Right ventricle myocardium superior (tissue), 1 donor: ENCODE measurements at regions of chr2 and their contacts with region 1.

Region 1: DNA sequence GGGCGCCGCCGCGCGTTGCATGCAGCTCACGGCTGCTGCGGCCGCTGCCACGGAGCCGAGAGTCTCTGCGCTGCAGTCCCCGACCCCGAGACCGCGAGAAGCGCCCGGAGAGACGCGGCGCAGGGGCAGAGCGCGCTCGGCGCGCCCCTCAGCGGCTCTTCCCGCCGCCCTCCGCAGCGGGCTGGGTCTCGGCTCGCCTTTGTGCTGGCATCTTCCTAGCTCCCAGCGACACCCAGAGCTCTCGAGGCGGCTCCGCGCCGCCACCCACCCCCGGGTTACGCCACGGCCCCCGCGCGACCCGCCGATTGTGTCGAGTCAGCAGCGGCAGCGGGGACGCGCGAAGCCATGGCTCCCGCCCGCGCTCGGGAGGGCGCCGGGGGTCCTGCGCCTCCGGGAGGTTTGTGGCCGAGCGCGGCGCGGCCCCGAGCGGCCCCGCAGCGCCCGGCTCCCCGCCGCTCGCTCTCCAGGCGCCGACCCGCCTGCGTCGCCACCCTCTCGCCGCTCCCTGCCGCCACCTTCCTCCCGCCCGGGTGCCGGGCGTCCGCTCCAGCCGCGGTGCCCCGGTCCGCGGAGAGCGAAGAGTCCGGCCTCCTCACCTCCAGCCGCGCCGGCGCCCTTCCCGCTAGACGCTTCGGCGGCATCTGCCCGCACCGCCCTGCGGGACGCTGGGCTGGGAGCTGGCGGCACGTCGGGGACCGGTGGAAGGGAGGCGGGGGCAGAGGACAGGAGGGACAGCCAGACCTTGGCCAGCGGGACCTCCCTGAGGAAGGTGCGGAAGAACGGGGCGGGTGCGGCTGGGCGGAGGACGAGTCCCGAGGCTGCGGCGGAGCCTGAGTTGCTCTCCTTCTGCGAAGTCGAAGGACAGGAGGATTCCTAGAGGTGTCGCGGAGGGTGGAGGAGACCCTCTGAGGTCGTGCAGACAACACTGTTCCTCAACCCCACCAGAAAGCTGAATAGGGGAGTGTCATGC is 46.3 kb upstream of the CCDC150 start:
- DNase-seq: peak; percentile 65
- ATAC-seq: peak; percentile 89

Region 2: DNA sequence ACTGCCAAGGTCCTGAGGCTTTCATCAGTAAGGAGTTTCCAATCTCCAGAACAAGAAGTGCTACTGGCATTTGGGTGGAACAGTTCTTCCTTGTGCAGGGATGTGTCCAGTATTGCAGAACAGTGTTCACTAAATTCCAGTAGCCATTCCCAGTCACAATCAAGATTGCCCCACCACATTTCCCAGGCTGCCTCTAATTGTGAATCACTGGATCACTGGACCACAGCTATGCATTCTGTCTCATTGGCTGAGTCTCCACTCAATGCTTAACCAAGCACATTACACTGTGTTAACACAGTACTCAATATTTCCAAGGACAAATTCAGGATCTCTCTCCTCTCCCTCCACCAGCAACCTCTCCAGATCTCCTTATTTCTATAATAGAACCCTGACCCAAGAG is 113.8 kb before region 1 on chr2:
- intact Hi-C with region 1: loop called (anchors 10 kb)
- DNase-seq: no peak
- ATAC-seq: no peak

Region 3: DNA sequence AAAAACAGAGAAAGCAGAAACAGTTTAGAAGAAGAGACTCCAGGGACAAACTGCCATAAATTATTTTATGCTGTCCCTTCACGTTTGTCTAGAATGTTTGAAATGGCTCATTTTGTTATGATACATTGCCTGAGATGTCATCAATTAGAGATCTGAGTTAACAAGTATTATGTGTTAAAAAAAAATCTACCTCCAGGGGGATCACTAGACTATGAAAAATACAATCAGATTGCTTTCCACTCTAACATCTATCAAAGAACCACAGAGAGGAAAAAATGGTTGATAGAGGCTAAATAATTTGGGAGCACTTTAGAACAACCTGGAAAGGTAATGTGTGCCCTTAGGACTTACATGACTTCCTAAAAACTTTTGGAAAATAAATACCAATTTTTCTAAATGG is 57.5 kb before region 1 on chr2:
- intact Hi-C with region 1: loop called (anchors 10 kb)
- DNase-seq: no peak
- ATAC-seq: no peak

Region 4: GRCh38 chr2:196551028-196551427 is 42.2 kb before region 1 on chr2:
- intact Hi-C with region 1: no loop called
- DNase-seq: no peak
- ATAC-seq: no peak

Region 5: DNA sequence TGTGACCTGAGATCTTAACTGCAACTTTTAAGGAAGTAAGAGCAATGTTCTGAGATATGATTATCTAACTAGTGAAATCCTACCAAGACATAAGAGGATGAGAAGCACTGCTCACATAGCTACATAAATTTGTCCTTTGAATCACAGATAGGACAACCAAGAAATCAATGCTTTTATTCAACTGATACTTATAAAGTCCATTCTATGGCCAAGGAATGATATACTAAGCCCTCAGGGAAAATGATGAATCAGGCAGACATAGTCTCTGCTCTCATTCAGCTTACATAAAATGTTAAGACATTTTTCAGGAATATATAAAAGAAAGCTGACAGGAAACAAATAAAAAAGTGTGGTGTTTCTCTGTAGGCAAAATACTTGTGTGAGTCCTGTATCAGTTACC is 294.2 kb after region 1 on chr2:
- intact Hi-C with region 1: no loop called
- DNase-seq: no peak
- ATAC-seq: no peak